ENCODE measurements at regions of chr11 and their contacts with region 1.

Region 1: DNA sequence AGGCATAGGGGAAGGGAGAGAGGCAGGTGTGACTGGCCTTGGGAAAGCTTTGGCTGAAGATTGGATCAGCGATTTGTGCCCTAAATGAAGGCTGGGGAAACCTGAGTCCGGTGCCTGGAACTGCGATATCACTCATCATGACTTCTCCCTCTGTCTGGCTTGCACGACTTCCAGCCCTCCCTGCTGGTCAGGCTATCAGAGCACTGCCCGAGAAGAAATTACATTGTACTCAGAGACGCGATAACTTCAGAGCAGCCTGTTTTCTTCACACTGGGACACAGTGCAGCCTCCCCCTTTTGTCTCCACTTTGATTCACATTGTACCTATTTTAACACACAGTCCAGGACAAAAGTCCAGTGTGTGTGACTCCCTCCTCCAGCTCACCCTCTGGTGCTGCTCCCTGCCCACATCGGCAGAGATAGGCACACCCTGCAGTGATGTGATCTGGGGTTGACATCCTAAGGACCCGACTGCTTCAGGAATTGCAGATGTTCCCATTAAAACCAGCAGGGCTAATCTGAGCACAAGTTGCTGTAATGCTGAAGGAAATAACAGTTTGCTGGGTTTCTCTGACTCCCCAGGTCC is 62.1 kb upstream of the CADM1 start:
- DNase-seq: no peak
- ATAC-seq: no peak
- H3K4me3 ChIP-seq: no peak overlapping the region
- H3K27ac ChIP-seq: no peak overlapping the region
- H3K4me1 ChIP-seq: no peaks in the 10 kb centered on the region
- H3K27me3 ChIP-seq: no peaks in the 10 kb centered on the region
- CTCF ChIP-seq: no peak
- EP300 ChIP-seq: no peak
- POLR2A ChIP-seq: no peak
- RAD21 ChIP-seq: no peak

Region 2: GRCh38 chr11:114896594-114896993 is 669.7 kb before region 1 on chr11:
- CTCF ChIA-PET with region 1: no interaction called
- POLR2A ChIA-PET with region 1: no interaction called
- in situ Hi-C with region 1: no loop called
- intact Hi-C with region 1: no loop called
- DNase-seq: no peak
- ATAC-seq: no peak
- H3K4me3 ChIP-seq: no peak overlapping the region
- H3K27ac ChIP-seq: no peak overlapping the region
- H3K4me1 ChIP-seq: no peaks in the 10 kb centered on the region
- H3K27me3 ChIP-seq: no peaks in the 10 kb centered on the region
- CTCF ChIP-seq: no peak
- EP300 ChIP-seq: no peak
- POLR2A ChIP-seq: no peak
- RAD21 ChIP-seq: no peak

Region 3: GRCh38 chr11:115990004-115990447 is 423.8 kb after region 1 on chr11:
- CTCF ChIA-PET with region 1: no interaction called
- POLR2A ChIA-PET with region 1: no interaction called
- in situ Hi-C with region 1: no loop called
- intact Hi-C with region 1: loop called (anchors 10 kb)
- DNase-seq: peak; percentile 30 to 66 (median 64)
- ATAC-seq: peak; percentile 98
- H3K4me3 ChIP-seq: peak overlapping the region; percentile 20; the same call in 1 of the 2 replicates
- H3K27ac ChIP-seq: no peak overlapping the region
- H3K4me1 ChIP-seq: no peaks in the 10 kb centered on the region; a peak in 1 of 5 replicates
- H3K27me3 ChIP-seq: no peaks in the 10 kb centered on the region; a peak in 1 of 5 replicates
- CTCF ChIP-seq: peak; percentile 69 to 86 (median 86)
- EP300 ChIP-seq: no peak
- POLR2A ChIP-seq: no peak
- RAD21 ChIP-seq: peak; percentile 32 to 52; a peak in 3 of 4 replicates